ENCODE measurements at regions of chr2 and their contacts with region 1.

Region 1: DNA sequence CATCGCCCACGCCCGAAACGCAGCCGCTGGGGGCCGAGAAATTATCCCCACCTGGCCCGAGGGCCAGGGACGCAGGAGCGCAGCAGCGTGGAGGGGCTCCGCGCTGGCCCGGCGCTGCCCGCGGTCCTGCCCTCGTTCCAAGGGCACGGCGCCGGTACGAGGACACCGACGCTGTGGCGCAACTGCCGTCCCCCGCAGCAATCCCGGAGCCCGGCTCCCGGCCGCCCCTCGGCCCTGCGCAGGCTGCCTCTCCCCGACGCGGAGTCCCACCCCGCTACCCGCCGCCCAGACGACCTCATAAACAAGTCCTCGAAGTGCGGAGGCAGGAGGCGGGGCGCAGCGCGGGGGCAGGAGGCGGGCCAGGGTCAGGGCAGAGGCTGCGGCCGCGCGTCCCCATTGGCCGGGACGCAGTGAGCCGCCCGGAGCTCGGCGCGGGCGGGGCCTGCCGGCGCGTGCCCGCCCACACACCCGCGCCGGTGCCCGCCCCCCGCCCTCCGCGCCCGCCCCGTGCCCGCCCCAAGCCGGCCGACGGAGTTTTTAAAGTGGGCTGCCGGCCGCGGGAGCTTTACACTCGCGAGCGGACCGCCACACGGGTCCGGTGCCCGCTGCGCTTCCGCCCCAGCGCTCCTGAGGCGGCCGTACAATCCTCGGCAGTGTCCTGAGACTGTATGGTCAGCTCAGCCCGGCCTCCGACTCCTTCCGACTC is at the start of gene EPAS1:
- DNase-seq: peak; percentile 98
- total RNA-seq, gene EPAS1: 374 to 478 TPM

Region 2: GRCh38 chr2:46002507-46002883 is 294.5 kb before region 1 on chr2:
- intact Hi-C with region 1: loop called in 1 of 2 experiments (anchors 10 kb)
- DNase-seq: no peak

Region 3: DNA sequence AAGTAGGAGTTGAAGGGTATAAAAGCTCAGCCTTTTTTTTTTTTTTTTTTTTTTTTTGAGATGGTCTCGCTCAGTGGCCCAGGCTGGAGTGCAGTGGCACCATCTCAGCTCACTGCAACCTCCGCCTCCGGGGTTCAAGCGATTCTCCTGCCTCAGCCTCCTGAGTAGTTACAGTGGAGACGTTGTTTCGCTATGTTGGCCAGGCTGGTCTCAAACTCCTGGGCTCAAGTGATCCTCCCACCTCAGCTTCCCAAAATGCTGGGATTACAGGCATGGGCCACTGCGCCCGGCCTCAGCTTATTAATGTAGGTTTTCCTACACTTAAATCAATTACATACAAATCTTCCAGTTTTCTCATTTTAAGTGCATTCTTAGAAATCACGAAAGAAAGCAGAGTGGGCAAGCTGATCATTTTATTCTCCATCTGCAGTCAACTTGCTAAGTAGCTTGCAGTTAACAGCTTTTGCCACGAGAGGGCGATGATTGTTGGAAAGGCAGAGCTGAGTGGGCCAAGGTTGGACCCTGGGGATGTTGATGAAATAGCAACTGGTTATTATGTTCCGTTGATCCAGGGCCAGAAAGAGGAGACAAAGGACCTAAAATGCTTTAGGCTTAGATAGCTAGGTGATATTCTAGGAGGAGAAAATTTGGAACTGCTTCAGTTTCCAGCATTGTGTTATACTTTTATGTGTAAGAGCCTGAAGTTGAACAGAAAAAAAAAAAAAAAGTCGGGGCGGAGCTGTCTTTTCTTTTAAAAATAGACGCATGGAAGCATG is 234.2 kb before region 1 on chr2:
- intact Hi-C with region 1: loop called in 1 of 2 experiments (anchors 10 kb)
- DNase-seq: peak; percentile 90

Region 4: GRCh38 chr2:46335391-46336282 is 38.6 kb after region 1 on chr2:
- intact Hi-C with region 1: loop called in 1 of 2 experiments (anchors 5 kb)
- DNase-seq: no peak

Region 5: GRCh38 chr2:46355756-46356155 is 58.8 kb after region 1 on chr2:
- intact Hi-C with region 1: loop called in 1 of 2 experiments (anchors 5 kb)
- DNase-seq: no peak

Region 6: GRCh38 chr2:46364797-46365457 is 67.9 kb after region 1 on chr2:
- intact Hi-C with region 1: loop called in 1 of 2 experiments (anchors 5 kb)
- DNase-seq: no peak